SK-N-SH (cell line): ENCODE measurements at regions of chr11 and their contacts with region 1.

Region 1: GRCh38 chr11:127843483-127844396 is 743.6 kb downstream of the ETS1 start:
- DNase-seq: peak; percentile 68
- H3K4me3 ChIP-seq: no peak overlapping the region; a peak in 1 of 4 replicates
- H3K27ac ChIP-seq: peak overlapping the region in 1 of 2 experiments; percentile 45; a peak in 2 of 4 replicates
- H3K4me1 ChIP-seq: peaks cover 0 to 4% of the 10 kb centered on the region in 2 experiments; a peak in 2 of 4 replicates
- H3K27me3 ChIP-seq: no peaks in the 10 kb centered on the region
- CTCF ChIP-seq: peak; percentile 87
- EP300 ChIP-seq: no peak
- RAD21 ChIP-seq: peak; percentile 80

Region 2: GRCh38 chr11:127825183-127825582 is 18.6 kb before region 1 on chr11:
- CTCF ChIA-PET with region 1: interaction called, 20 read pairs
- POLR2A ChIA-PET with region 1: no interaction called
- DNase-seq: no peak
- H3K4me3 ChIP-seq: no peak overlapping the region
- H3K27ac ChIP-seq: no peak overlapping the region
- H3K4me1 ChIP-seq: no peaks in the 10 kb centered on the region; a peak in 1 of 4 replicates
- H3K27me3 ChIP-seq: no peaks in the 10 kb centered on the region
- CTCF ChIP-seq: no peak
- EP300 ChIP-seq: no peak
- RAD21 ChIP-seq: no peak

Region 3: GRCh38 chr11:127866109-127866508 is 22.4 kb after region 1 on chr11:
- CTCF ChIA-PET with region 1: interaction called, 11 read pairs
- POLR2A ChIA-PET with region 1: no interaction called
- DNase-seq: no peak
- H3K4me3 ChIP-seq: no peak overlapping the region
- H3K27ac ChIP-seq: peak overlapping the region in 1 of 2 experiments; percentile 39; a peak in 2 of 4 replicates
- H3K4me1 ChIP-seq: peaks cover 0 to 7% of the 10 kb centered on the region in 2 experiments; a peak in 2 of 4 replicates
- H3K27me3 ChIP-seq: no peaks in the 10 kb centered on the region
- CTCF ChIP-seq: no peak
- EP300 ChIP-seq: no peak
- RAD21 ChIP-seq: no peak

Region 4: GRCh38 chr11:127902382-127902781 is 58.6 kb after region 1 on chr11:
- CTCF ChIA-PET with region 1: interaction called, 24 read pairs
- POLR2A ChIA-PET with region 1: no interaction called
- DNase-seq: peak; percentile 73
- H3K4me3 ChIP-seq: no peak overlapping the region
- H3K27ac ChIP-seq: peak overlapping the region in 1 of 2 experiments; percentile 95; a peak in 2 of 4 replicates
- H3K4me1 ChIP-seq: peaks cover 0 to 12% of the 10 kb centered on the region in 2 experiments; a peak in 2 of 4 replicates
- H3K27me3 ChIP-seq: no peaks in the 10 kb centered on the region
- CTCF ChIP-seq: no peak
- EP300 ChIP-seq: peak in 1 of 2 experiments; percentile 89; a peak in 1 of 4 replicates
- RAD21 ChIP-seq: no peak; the same call in 1 of the 2 replicates

Region 5: GRCh38 chr11:128021349-128022006 is 177.7 kb after region 1 on chr11:
- CTCF ChIA-PET with region 1: interaction called, 70 read pairs
- POLR2A ChIA-PET with region 1: no interaction called
- DNase-seq: peak; percentile 52
- H3K4me3 ChIP-seq: no peak overlapping the region; a peak in 1 of 4 replicates
- H3K27ac ChIP-seq: no peak overlapping the region
- H3K4me1 ChIP-seq: peaks cover 2 to 10% of the 10 kb centered on the region in 2 experiments; a peak in 2 of 4 replicates
- H3K27me3 ChIP-seq: no peaks in the 10 kb centered on the region
- CTCF ChIP-seq: peak; percentile 51
- EP300 ChIP-seq: no peak
- RAD21 ChIP-seq: peak; percentile 89